H1 (cell line): ENCODE measurements at regions of chr3 and their contacts with region 1.

Region 1: DNA sequence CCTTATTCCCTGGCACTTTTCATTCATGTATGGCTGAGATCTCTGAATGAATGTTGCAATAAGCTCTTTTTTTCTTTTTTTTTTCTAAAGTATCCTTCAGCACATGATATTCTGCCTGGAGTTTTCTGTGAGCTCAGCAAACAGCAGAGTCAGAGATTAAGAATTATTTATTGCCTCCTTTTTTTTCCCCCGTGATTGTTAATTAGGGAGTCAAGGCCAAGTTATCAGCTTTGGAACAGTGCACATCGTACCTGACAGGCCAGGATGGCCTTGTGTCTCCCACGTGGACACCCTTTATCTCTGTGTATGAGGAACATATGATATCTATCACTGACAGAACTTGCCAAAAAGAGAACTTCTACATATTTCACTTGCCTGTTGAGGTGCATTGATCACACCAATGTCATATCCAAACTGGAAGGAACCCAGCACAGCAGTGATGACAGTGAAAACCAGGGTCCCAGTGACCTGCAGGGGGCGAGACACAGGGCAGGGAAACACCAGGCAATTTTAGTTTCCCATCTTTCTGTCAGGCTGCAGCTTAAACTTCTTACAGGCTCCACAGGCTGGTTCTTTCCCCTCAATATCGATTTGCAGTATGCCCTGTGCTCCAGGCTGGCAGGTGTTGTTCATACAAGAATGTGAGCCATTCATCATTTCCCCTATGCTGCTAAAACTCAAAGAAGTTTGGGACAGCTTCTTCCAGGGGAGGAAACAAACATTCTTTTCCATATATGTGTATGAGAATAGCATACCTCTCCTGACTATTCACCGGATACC is 8.2 kb downstream of the SLC2A2 start:
- DNase-seq: peak in 1 of 2 experiments; percentile 57
- H3K4me3 ChIP-seq: no peak overlapping the region
- H3K27ac ChIP-seq: no peak overlapping the region
- H3K4me1 ChIP-seq: no peaks in the 10 kb centered on the region
- H3K27me3 ChIP-seq: no peaks in the 10 kb centered on the region
- CTCF ChIP-seq: peak; percentile 54 to 82 (median 80)
- EP300 ChIP-seq: no peak
- POLR2A ChIP-seq: no peak
- RAD21 ChIP-seq: peak; percentile 47 to 50

Region 2: DNA sequence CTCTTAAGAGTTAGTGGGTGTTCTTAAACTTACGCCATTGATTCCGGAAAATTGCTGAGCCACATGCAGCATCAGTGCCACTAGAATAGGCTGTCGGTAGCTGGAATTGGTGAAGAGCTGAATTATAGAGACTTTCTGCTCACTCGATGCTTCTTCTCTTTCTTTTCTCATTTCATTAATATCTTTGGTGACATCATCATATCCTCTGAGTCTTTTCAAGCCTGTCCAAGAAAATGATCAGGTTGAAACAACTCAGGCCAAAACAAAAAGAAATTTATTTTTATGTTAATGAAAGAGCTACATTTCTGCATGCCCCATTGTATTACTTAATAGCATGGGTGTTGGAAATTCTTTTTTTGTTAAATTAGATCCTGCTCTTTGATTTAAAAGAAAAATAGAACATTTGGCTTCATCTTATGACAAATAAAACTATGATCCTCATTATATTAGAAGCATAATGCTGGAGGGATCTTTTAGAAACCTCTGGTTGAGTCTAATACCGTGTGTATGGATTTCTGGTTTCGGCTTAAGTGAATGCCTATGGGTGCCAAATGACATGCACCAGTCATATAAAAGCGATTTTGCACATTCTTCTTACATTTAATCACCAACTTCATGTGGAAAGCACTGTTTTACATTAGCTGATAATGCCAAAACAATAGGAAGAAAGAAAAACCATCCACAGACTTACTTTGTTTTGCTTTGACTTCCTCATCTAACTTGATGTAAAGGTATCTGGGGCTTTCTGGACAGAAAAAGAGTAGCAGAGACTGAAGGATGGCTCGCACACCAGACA is 12.9 kb before region 1 on chr3:
- CTCF ChIA-PET with region 1: interaction called, 21 read pairs
- POLR2A ChIA-PET with region 1: no interaction called
- DNase-seq: no peak
- H3K4me3 ChIP-seq: no peak overlapping the region
- H3K27ac ChIP-seq: no peak overlapping the region
- H3K4me1 ChIP-seq: no peaks in the 10 kb centered on the region
- H3K27me3 ChIP-seq: no peaks in the 10 kb centered on the region
- CTCF ChIP-seq: no peak
- EP300 ChIP-seq: no peak
- POLR2A ChIP-seq: no peak
- RAD21 ChIP-seq: no peak